ENCODE measurements at regions of chr1 and their contacts with region 1.

Region 1: DNA sequence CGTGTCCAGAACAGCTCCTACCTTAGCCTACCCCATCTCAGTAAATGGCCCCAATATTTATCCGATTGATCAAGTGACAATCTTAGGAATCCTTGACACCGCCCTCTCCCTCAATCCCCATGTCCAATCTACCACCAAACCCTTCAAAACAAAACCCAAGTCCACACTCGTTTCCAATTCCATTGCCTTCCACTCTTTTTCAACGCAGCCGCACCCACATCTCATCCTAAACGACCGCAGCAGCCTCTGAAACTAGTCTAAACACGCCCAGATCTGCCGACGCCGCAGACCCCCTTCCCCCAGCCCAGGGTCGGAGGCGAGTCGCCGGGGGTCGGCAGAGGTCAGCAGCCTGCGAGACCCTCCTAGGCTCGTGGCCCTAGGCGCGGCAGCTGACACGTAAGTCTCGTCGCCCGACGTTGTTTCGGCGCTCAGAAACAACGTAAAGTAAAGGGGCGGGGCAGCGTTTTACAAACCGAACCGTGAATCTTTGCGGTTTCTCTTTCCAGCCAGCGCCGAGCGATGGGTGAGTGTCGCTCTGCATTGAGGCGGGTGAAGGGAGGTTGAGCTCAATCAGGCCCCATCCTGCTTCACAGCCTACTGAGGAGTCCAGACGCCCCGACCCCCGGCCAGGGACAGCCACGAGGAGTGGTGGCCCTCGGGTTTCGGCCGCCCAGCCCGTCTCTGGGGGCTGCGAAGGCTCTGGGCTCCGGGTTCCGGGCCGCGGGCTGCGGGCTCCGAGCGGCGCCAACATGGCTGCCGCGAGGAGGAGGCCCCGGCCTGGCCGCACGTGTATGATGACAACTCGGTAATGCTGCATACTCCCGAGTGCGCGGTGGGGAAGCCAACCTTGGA is at the start of gene RPS8:
- DNase-seq: peak; percentile 98
- H3K4me3 ChIP-seq: peak within 1 kb of the TSS; percentile 62 to 83 (median 79)
- H3K27ac ChIP-seq: peak within 1 kb of the TSS; percentile 91 to 97 (median 96)
- H3K4me1 ChIP-seq: peaks cover 20 to 38% (median 33%) of the 10 kb centered on the region in 4 donors
- H3K27me3 ChIP-seq: no peaks in the 10 kb centered on the region
- CTCF ChIP-seq: no peak
- EP300 ChIP-seq: no peak
- POLR2A ChIP-seq: peak; percentile 97
- total RNA-seq, gene RPS8: 1,063 to 2,408 (median 1,844) TPM

Region 2: DNA sequence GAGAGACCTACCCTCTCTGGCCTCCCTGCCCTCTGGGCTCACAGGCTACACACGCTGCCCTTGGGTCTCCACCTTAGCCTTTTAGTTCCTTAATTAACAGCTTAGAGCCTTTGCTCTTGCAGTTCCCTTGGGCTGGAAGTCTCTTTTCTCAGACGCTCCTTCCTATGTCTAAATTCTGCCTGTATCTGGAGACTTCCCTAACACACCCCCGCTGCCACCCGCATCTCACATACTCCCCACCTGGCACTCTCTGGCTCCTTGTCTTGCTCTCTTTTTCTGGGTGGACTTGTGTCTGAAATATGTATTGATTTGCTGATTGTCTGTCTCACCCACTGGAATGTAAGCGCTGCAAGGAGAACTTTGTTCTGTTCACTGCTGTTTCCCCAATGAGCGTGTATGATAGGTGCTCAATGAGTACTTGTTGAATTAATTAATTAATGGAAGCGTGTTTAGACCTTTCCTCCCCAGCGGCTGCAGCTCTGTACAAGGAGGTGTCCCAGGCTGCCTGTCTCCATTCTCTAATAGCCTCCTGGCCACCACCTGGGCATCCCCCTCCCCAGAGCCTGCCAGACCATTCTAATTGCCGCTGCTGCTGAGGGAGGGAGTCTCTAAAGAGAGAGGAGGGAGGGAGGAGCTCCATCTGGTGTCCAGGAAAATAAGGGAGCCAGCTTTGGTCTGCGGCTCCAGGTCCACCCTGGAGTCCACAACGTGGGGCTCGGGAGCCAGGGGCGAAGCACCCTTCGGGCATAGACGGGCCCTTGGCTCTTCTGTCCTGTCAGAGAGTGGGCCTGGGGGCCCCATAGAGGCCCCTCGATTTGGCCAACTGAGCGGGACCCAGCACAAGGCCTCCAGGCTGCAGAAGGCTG is 274.9 kb before region 1 on chr1:
- intact Hi-C with region 1: no loop called
- DNase-seq: no peak
- H3K4me3 ChIP-seq: peak overlapping the region in 1 of 4 donors; percentile 18
- H3K27ac ChIP-seq: no peak overlapping the region
- H3K4me1 ChIP-seq: peaks cover 11 to 21% (median 18%) of the 10 kb centered on the region in 4 donors
- H3K27me3 ChIP-seq: peaks cover 0 to 19% (median 0%) of the 10 kb centered on the region in 4 donors
- CTCF ChIP-seq: peak; percentile 27 to 41 (median 34)
- EP300 ChIP-seq: no peak
- POLR2A ChIP-seq: no peak

Region 3: GRCh38 chr1:44730741-44731512 is 44.4 kb before region 1 on chr1 and contains the start of gene RNU5D-1:
- intact Hi-C with region 1: loop called (anchors 5 kb)
- DNase-seq: peak; percentile 98
- H3K4me3 ChIP-seq: peak within 1 kb of the TSS; percentile 19 to 34 (median 32)
- H3K27ac ChIP-seq: peak within 1 kb of the TSS; percentile 78 to 84 (median 80)
- H3K4me1 ChIP-seq: peaks cover 0 to 25% (median 15%) of the 10 kb centered on the region in 4 donors
- H3K27me3 ChIP-seq: no peaks in the 10 kb centered on the region
- CTCF ChIP-seq: peak; percentile 68 to 86 (median 85)
- EP300 ChIP-seq: no peak
- POLR2A ChIP-seq: peak; percentile 96
- total RNA-seq, gene RNU5D-1: not detected

Measured in esophagus muscularis mucosa (tissue), 4 donors.